CD4-positive, alpha-beta T cell (primary cell): ENCODE measurements at regions of chr12 and their contacts with region 1.

Region 1: GRCh38 chr12:110600254-110600653 is 13.7 kb upstream of the TCTN1 start:
- DNase-seq: peak in 3 of 14 experiments; percentile 70 to 76 (median 74)
- ATAC-seq: peak; percentile 46
- H3K4me3 ChIP-seq: no peak overlapping the region
- H3K4me3 Mint-ChIP-seq: no peak overlapping the region
- H3K27ac ChIP-seq: no peak overlapping the region
- H3K27ac Mint-ChIP-seq: peak overlapping the region; percentile 0
- H3K4me1 ChIP-seq: peaks cover 5% of the 10 kb centered on the region
- H3K4me1 Mint-ChIP-seq: peaks cover 10% of the 10 kb centered on the region
- H3K27me3 ChIP-seq: no peaks in the 10 kb centered on the region
- H3K27me3 Mint-ChIP-seq: no peaks in the 10 kb centered on the region
- CTCF ChIP-seq: peak; percentile 71

Region 2: GRCh38 chr12:110100315-110100970 is 499.8 kb before region 1 on chr12:
- CTCF ChIA-PET with region 1: no interaction called
- POLR2A ChIA-PET with region 1: no interaction called
- intact Hi-C with region 1: loop called (anchors 2 to 5 kb)
- DNase-seq: peak; percentile 32 to 84 (median 46)
- ATAC-seq: peak; percentile 80
- H3K4me3 ChIP-seq: no peak overlapping the region
- H3K4me3 Mint-ChIP-seq: no peak overlapping the region
- H3K27ac ChIP-seq: no peak overlapping the region
- H3K27ac Mint-ChIP-seq: no peak overlapping the region
- H3K4me1 ChIP-seq: no peaks in the 10 kb centered on the region
- H3K4me1 Mint-ChIP-seq: peaks cover 13% of the 10 kb centered on the region
- H3K27me3 ChIP-seq: no peaks in the 10 kb centered on the region
- H3K27me3 Mint-ChIP-seq: no peaks in the 10 kb centered on the region
- CTCF ChIP-seq: peak; percentile 99

Region 3: GRCh38 chr12:110247333-110248104 is 352.7 kb before region 1 on chr12:
- CTCF ChIA-PET with region 1: no interaction called
- POLR2A ChIA-PET with region 1: no interaction called
- intact Hi-C with region 1: no loop called
- DNase-seq: no peak
- ATAC-seq: no peak
- H3K4me3 ChIP-seq: no peak overlapping the region
- H3K4me3 Mint-ChIP-seq: no peak overlapping the region
- H3K27ac ChIP-seq: no peak overlapping the region
- H3K27ac Mint-ChIP-seq: no peak overlapping the region
- H3K4me1 ChIP-seq: no peaks in the 10 kb centered on the region
- H3K4me1 Mint-ChIP-seq: no peaks in the 10 kb centered on the region
- H3K27me3 ChIP-seq: no peaks in the 10 kb centered on the region
- H3K27me3 Mint-ChIP-seq: no peaks in the 10 kb centered on the region
- CTCF ChIP-seq: no peak

Region 4: DNA sequence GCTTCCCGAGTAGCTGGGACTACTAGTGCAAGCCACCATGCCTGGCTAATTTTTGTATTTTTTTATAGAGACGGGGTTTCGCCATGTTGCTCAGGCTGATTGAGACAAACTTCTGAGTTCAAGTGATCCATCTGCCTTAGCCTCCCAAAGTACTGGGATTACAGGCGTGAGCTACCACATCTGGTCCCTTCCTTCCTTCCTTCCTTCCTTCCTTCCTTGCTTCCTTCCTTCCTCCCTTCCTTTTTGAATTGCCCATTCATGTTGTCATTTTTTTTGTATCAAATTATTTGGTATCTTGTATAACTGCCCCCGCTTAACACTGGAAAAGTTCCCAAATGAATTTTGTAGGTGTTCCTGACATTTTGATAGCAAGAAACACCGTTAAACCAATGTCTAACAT is 86.4 kb before region 1 on chr12:
- CTCF ChIA-PET with region 1: interaction called, 9 read pairs
- POLR2A ChIA-PET with region 1: interaction called, 3 read pairs
- intact Hi-C with region 1: loop called (anchors 1 to 2 kb)
- DNase-seq: no peak
- ATAC-seq: no peak
- H3K4me3 ChIP-seq: no peak overlapping the region
- H3K4me3 Mint-ChIP-seq: no peak overlapping the region
- H3K27ac ChIP-seq: no peak overlapping the region
- H3K27ac Mint-ChIP-seq: no peak overlapping the region
- H3K4me1 ChIP-seq: no peaks in the 10 kb centered on the region
- H3K4me1 Mint-ChIP-seq: no peaks in the 10 kb centered on the region
- H3K27me3 ChIP-seq: no peaks in the 10 kb centered on the region
- H3K27me3 Mint-ChIP-seq: no peaks in the 10 kb centered on the region
- CTCF ChIP-seq: no peak

Region 5: GRCh38 chr12:110555577-110556406 is 44.5 kb before region 1 on chr12:
- CTCF ChIA-PET with region 1: interaction called, 112 read pairs
- POLR2A ChIA-PET with region 1: interaction called, 23 read pairs
- intact Hi-C with region 1: loop called (anchors 1 kb)
- DNase-seq: no peak
- ATAC-seq: no peak
- H3K4me3 ChIP-seq: no peak overlapping the region
- H3K4me3 Mint-ChIP-seq: no peak overlapping the region
- H3K27ac ChIP-seq: no peak overlapping the region
- H3K27ac Mint-ChIP-seq: peak overlapping the region; percentile 25
- H3K4me1 ChIP-seq: peaks cover 35% of the 10 kb centered on the region
- H3K4me1 Mint-ChIP-seq: peaks cover 60% of the 10 kb centered on the region
- H3K27me3 ChIP-seq: no peaks in the 10 kb centered on the region
- H3K27me3 Mint-ChIP-seq: no peaks in the 10 kb centered on the region
- CTCF ChIP-seq: no peak

Region 6: GRCh38 chr12:110583137-110584059 is 16.9 kb before region 1 on chr12 and contains the start of gene PPTC7:
- CTCF ChIA-PET with region 1: interaction called, 19 read pairs
- POLR2A ChIA-PET with region 1: interaction called, 7 read pairs
- intact Hi-C with region 1: no loop called
- DNase-seq: peak; percentile 96 to 98 (median 97)
- ATAC-seq: peak; percentile 92
- H3K4me3 ChIP-seq: peak within 1 kb of the TSS; percentile 95
- H3K4me3 Mint-ChIP-seq: peak within 1 kb of the TSS; percentile 97
- H3K27ac ChIP-seq: peak within 1 kb of the TSS; percentile 64 to 91
- H3K27ac Mint-ChIP-seq: peak within 1 kb of the TSS; percentile 96
- H3K4me1 ChIP-seq: peaks cover 67% of the 10 kb centered on the region
- H3K4me1 Mint-ChIP-seq: peaks cover 68% of the 10 kb centered on the region
- H3K27me3 ChIP-seq: no peaks in the 10 kb centered on the region
- H3K27me3 Mint-ChIP-seq: no peaks in the 10 kb centered on the region
- CTCF ChIP-seq: no peak
- total RNA-seq, gene PPTC7: 53.8 to 54.8 TPM

Region 7: DNA sequence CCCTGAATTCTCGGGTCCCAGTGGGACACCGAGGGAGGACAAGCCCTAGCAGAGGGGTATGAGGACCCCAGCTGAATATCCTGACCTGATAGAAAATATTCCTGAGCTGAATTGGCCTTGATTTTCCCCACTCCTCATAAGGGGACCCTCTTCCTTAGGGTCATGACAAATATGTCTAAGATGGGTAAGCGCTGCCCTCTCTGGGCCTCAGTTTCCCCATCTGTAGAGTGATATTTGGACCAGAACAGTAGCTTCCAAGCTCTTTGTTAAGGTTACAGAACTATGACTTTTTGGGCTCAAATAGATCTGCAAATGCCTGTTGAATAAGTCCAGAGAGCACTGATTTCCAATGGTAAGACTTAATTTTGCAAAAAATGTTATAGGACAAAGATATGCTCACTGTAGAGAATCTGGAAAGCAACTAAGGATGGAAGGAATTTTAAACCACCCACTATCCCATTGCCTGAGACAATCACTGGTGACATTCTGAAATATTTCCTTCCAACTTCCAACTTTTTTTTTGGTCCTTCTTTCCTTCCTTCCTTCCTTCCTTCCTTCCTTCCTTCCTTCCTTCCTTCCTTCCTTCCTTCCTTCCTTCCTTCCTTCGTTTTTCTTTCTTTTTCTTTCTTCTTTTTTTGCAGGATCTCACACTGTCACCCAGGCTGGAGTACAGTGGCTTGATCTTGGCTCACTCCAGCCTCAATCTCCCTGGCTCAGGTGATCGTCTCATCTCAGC is 288.2 kb after region 1 on chr12:
- CTCF ChIA-PET with region 1: interaction called, 4 read pairs
- POLR2A ChIA-PET with region 1: no interaction called
- intact Hi-C with region 1: loop called in 1 of 2 experiments (anchors 5 kb)
- DNase-seq: no peak
- ATAC-seq: no peak
- H3K4me3 ChIP-seq: peak overlapping the region; percentile 71
- H3K4me3 Mint-ChIP-seq: peak overlapping the region; percentile 89
- H3K27ac ChIP-seq: no peak overlapping the region
- H3K27ac Mint-ChIP-seq: no peak overlapping the region
- H3K4me1 ChIP-seq: peaks cover 11% of the 10 kb centered on the region
- H3K4me1 Mint-ChIP-seq: peaks cover 3% of the 10 kb centered on the region
- H3K27me3 ChIP-seq: no peaks in the 10 kb centered on the region
- H3K27me3 Mint-ChIP-seq: no peaks in the 10 kb centered on the region
- CTCF ChIP-seq: peak; percentile 54